ENCODE measurements at regions of chr18 and their contacts with region 1.

Region 1: DNA sequence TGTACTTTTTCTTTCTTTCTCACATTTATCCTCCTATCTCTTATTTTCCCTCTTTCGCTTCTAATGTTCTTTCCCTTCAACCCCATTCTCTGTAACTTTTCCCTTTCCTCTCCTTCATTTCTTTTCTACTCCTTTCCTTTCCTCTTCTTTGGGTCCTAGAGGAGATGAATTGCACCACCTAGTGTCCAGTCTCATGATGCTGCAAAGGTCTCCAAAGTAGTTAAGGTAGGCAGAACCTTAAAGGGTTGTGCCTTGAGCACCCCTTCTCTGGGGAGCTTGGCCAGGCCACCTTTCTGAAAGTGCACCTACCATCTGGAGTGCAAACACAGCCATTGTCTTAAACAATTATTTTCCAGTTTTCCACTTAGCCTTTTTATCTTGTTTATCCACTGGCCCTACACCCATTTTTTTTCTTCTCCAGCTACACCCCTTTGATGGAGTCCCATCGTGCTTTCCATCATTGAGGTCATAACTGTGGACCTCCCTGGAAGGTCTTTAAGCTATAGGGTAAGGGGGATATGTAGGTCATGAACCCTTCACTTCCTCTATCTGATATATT is 156.0 kb downstream of the ESCO1 start:
- ATAC-seq: peak in 5 of 8 experiments; percentile 39 to 74 (median 70)
- H3K4me3 ChIP-seq: no peak overlapping the region
- H3K27ac ChIP-seq: no peak overlapping the region
- H3K4me1 ChIP-seq: no peaks in the 10 kb centered on the region

Region 2: DNA sequence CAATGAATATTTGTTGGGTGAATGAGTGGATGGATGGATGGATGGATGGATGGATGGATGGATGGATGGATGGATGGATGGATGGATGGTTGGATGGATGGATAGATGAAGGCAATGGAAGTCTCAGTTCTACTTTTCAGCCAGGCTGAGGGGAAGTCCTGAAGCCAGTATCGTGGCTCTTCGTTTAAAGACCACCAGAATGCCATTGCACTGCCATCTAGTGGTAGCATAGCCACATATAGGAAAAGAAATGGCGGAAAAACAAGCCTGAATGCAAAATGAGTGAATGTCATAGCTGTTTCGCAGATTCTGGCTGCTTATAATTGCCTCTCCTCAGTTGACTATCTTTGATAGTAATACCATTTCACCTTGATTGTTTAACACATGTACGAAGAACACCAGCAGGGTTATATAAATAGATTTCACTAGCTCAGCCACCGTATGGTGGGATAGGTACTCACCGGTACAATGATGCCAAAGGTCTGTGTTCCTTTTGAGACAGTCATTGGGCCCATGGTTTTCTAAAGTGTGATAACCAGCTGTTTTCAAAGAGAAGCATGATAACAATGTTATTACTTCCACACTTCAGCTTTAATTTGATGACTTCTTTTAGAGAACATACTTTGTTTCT is 264.8 kb before region 1 on chr18:
- in situ Hi-C with region 1: loop called in 1 of 9 experiments (anchors 25 kb)
- ATAC-seq: peak; percentile 36 to 87 (median 68)
- H3K4me3 ChIP-seq: no peak overlapping the region
- H3K27ac ChIP-seq: no peak overlapping the region
- H3K4me1 ChIP-seq: no peaks in the 10 kb centered on the region

Region 3: GRCh38 chr18:21191596-21192307 is 252.8 kb before region 1 on chr18:
- in situ Hi-C with region 1: loop called in 5 of 9 experiments (anchors 5 to 25 kb)
- ATAC-seq: peak in 5 of 8 experiments; percentile 40 to 99 (median 99)
- H3K4me3 ChIP-seq: no peak overlapping the region
- H3K27ac ChIP-seq: no peak overlapping the region
- H3K4me1 ChIP-seq: no peaks in the 10 kb centered on the region

Region 4: DNA sequence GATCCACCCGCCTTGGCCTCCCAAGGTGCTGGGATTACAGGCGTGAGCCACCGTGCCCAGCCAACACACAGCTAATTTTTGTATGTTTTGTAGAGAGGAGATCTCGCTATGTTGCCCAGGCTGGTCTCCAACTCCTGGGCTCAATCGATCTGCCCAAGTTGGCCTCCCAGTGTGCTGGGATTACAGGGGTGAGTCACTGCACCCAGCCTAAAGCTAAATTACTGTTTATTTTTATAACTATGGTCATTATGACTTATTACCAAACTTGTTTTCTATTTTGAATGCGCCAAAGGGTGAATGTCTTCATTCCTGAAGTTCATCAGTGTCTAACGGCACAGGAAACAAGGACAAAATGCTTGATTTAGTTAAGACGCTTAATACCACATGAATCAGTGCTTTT is 241.4 kb before region 1 on chr18:
- in situ Hi-C with region 1: loop called in 7 of 9 experiments (anchors 10 to 25 kb)
- ATAC-seq: no peak
- H3K4me3 ChIP-seq: no peak overlapping the region
- H3K27ac ChIP-seq: no peak overlapping the region
- H3K4me1 ChIP-seq: no peaks in the 10 kb centered on the region

Region 5: GRCh38 chr18:21218630-21219261 is 225.8 kb before region 1 on chr18:
- in situ Hi-C with region 1: loop called in 3 of 9 experiments (anchors 10 to 25 kb)
- ATAC-seq: no peak
- H3K4me3 ChIP-seq: no peak overlapping the region
- H3K27ac ChIP-seq: no peak overlapping the region
- H3K4me1 ChIP-seq: peaks cover 0 to 6% of the 10 kb centered on the region in 2 donors

Region 6: DNA sequence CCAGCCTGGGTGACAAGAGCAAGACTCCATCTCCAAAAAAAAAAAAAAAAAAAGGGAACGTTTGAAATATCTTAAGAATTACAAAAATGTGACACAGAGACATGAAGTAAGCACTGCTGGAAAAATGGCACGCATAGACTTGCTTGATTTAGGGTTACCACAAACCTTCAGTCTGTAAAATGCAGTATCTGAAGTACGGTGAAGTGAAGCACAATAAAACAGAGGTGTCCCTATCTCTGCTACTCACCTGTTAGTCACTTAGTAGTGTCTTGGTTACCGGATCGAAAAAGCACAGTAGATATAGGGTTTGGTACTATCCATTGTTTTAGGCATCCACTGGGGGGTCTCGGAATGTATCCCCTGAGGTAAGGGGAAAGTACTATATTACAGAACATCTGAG is 214.1 kb before region 1 on chr18:
- in situ Hi-C with region 1: loop called in 1 of 9 experiments (anchors 10 kb)
- ATAC-seq: no peak
- H3K4me3 ChIP-seq: no peak overlapping the region
- H3K27ac ChIP-seq: no peak overlapping the region
- H3K4me1 ChIP-seq: no peaks in the 10 kb centered on the region